ENCODE measurements at regions of chr5 and their contacts with region 1.

Region 1: GRCh38 chr5:132526290-132526973 is 16.9 kb downstream of the IL5 start:
- DNase-seq: peak; percentile 60
- ATAC-seq: peak; percentile 34
- H3K4me3 Mint-ChIP-seq: no peak overlapping the region
- H3K27ac Mint-ChIP-seq: no peak overlapping the region
- H3K4me1 Mint-ChIP-seq: peaks cover 39% of the 10 kb centered on the region
- H3K27me3 Mint-ChIP-seq: peaks cover 3% of the 10 kb centered on the region

Region 2: DNA sequence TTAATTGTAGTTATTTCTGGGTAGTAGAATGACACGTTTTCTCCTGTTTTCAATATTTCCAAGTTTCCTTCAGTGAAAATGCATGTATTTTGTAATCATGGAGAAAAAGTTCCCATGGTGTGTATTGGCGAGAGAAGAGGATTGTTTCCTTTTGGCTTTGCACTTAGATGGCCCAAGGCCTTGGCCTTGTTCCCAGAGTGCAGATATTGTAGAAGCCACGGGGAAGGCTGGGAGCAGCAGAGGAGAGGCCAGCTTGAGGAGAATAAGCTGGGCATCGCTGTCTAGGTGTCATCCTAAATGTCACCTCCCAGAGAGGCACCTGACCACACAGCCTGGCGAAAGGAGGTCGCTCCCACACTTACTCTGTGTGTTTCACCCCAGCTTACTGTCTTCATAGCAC is 79.8 kb before region 1 on chr5:
- CTCF ChIA-PET with region 1: no interaction called
- POLR2A ChIA-PET with region 1: no interaction called
- intact Hi-C with region 1: no loop called
- DNase-seq: no peak
- ATAC-seq: no peak
- H3K4me3 Mint-ChIP-seq: no peak overlapping the region
- H3K27ac Mint-ChIP-seq: no peak overlapping the region
- H3K4me1 Mint-ChIP-seq: peaks cover 48% of the 10 kb centered on the region
- H3K27me3 Mint-ChIP-seq: no peaks in the 10 kb centered on the region

Region 3: DNA sequence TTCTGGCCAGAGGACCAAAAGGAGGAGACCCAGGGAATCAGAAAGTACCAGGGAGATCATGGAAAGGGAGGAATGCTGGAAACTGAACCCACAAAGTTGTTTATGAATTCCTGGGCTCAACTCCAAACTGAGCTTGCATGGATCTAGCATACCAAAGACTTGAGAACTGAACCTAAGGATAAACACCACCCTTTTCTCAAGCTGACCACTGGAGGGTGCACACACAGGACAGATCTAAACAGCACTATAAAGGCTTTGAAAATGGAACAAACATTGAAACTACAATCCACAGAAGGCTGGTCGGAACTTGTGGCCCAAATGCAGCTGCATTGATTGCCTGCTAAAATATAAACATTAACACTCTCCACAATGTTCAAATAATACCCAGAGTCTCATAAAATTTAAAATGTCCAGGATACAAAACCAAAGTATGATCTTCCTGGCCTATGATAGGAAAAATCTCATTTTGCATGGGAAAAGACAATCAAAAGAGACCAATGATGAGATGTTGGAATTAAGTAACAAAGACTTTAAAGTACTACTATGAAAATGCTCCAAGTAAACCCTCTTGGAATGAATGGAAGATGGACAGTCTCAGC is 20.2 kb before region 1 on chr5:
- CTCF ChIA-PET with region 1: interaction called, 16 read pairs
- POLR2A ChIA-PET with region 1: no interaction called
- intact Hi-C with region 1: no loop called
- DNase-seq: peak; percentile 43
- ATAC-seq: peak; percentile 62
- H3K4me3 Mint-ChIP-seq: no peak overlapping the region
- H3K27ac Mint-ChIP-seq: no peak overlapping the region
- H3K4me1 Mint-ChIP-seq: no peaks in the 10 kb centered on the region
- H3K27me3 Mint-ChIP-seq: peaks cover 23% of the 10 kb centered on the region

Region 4: GRCh38 chr5:132576123-132576522 is 49.7 kb after region 1 on chr5:
- CTCF ChIA-PET with region 1: interaction called, 9 read pairs
- POLR2A ChIA-PET with region 1: no interaction called
- intact Hi-C with region 1: loop called in 1 of 2 experiments (anchors 5 kb)
- DNase-seq: no peak
- ATAC-seq: peak; percentile 74
- H3K4me3 Mint-ChIP-seq: no peak overlapping the region
- H3K27ac Mint-ChIP-seq: peak overlapping the region; percentile 17
- H3K4me1 Mint-ChIP-seq: peaks cover 30% of the 10 kb centered on the region
- H3K27me3 Mint-ChIP-seq: no peaks in the 10 kb centered on the region

Region 5: DNA sequence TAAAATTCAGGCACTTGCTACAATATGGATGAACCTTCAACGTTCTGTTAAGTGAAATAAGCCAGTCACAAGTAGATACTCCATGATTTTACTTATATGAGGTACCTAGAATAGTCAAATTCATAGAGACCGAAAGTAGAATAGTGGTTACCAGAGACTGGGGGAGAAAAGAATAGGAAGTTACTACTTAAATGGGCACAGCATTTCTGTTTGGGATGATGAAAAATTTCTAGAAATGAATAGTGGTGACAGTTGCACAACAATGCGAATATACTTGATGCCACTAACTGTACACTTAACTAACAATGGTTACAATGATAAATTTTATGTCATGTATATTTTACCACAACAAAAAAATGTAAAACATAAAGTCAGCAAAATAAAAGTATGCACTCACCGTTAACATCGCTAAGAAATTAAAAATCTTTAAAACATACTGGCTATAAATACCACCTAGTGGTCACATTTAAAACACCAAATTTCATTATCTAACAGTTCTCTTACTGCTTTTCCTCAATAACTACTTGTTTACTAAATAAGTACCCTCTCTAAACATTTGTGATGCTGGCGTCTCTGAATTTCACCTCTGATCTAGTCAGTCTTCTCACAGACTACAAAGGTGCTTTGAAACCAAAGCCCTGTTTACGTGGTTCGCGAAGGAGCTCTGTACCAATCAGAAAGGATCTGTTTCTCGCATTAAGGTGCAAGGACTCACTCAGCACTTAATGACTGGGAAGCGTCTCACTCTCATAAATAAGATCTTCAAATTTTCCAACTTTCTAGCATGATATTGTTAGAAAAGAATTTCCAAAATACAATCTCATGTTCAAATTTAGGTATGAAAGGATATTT is 188.2 kb after region 1 on chr5:
- CTCF ChIA-PET with region 1: interaction called, 14 read pairs
- POLR2A ChIA-PET with region 1: no interaction called
- intact Hi-C with region 1: loop called (anchors 1 to 5 kb)
- DNase-seq: no peak
- ATAC-seq: peak; percentile 86
- H3K4me3 Mint-ChIP-seq: peak overlapping the region; percentile 41
- H3K27ac Mint-ChIP-seq: no peak overlapping the region
- H3K4me1 Mint-ChIP-seq: peaks cover 11% of the 10 kb centered on the region
- H3K27me3 Mint-ChIP-seq: no peaks in the 10 kb centered on the region